Aorta (tissue), 5 donors: ENCODE measurements at regions of chr12 and their contacts with region 1.

Region 1: DNA sequence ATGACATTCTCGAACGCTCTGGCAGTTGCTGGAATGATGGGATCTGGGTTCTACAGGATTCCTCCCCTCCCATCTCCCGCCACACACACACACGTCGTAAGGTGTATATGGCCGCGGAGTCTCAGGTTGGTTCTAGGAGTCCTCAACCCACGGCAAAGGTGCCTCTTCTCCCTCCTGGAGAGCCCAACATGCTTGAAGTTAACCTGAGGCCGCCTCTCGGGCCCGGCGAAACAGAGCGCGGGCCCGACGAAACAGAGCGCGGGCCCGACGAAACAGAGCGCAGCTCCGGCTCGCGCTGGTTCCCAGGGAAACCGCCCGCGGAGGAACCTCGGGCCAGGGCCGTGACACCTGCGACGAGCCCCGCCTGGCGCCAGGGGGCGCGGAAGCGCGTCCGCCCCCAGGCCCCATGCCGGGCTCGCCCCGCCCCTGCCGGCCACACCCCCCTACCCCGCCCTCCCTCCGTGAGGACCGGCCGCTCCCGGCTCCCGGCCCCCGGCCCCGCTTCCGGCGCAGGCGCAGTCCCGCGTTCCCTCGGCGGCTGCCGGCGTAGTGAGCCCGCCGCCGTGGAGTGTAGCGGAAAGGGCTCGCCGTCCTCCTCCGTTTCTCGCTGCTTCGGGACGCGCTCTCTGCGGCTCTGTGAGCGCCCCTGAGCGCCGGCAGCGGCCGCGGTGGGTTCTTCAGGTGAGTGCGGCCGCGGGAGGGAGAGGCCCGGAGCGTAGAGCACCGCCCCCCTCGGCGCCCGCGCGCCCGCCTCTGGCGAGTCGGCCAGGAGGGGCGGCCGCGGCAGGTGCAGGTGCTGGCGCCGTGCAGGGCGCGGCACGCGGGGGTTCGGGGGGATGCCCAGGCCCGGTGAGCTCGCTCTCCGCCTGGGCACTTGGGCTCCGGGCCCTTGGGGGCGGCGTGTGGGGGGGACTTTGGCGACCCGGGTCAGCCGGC is at the start of gene RAB3IP:
- DNase-seq: peak; percentile 88 to 97
- ATAC-seq: peak; percentile 97
- H3K4me3 ChIP-seq: peak within 1 kb of the TSS; percentile 73 to 97
- H3K27ac ChIP-seq: no peak within 1 kb of the TSS
- H3K4me1 ChIP-seq: no peaks in the 10 kb centered on the region
- H3K27me3 ChIP-seq: no peaks in the 10 kb centered on the region
- total RNA-seq, gene RAB3IP: 11.1 to 18.4 TPM

Region 2: GRCh38 chr12:69623970-69624369 is 114.6 kb before region 1 on chr12:
- intact Hi-C with region 1: no loop called
- DNase-seq: no peak
- ATAC-seq: no peak
- H3K4me3 ChIP-seq: no peak overlapping the region
- H3K27ac ChIP-seq: no peak overlapping the region
- H3K4me1 ChIP-seq: no peaks in the 10 kb centered on the region
- H3K27me3 ChIP-seq: no peaks in the 10 kb centered on the region

Region 3: GRCh38 chr12:69688496-69689427 is 49.9 kb before region 1 on chr12:
- intact Hi-C with region 1: loop called in 1 of 2 experiments (anchors 5 kb)
- DNase-seq: peak; percentile 90 to 91
- ATAC-seq: peak; percentile 75
- H3K4me3 ChIP-seq: no peak overlapping the region
- H3K27ac ChIP-seq: no peak overlapping the region
- H3K4me1 ChIP-seq: no peaks in the 10 kb centered on the region
- H3K27me3 ChIP-seq: no peaks in the 10 kb centered on the region